ENCODE measurements at regions of chr1 and their contacts with region 1.

Region 1: DNA sequence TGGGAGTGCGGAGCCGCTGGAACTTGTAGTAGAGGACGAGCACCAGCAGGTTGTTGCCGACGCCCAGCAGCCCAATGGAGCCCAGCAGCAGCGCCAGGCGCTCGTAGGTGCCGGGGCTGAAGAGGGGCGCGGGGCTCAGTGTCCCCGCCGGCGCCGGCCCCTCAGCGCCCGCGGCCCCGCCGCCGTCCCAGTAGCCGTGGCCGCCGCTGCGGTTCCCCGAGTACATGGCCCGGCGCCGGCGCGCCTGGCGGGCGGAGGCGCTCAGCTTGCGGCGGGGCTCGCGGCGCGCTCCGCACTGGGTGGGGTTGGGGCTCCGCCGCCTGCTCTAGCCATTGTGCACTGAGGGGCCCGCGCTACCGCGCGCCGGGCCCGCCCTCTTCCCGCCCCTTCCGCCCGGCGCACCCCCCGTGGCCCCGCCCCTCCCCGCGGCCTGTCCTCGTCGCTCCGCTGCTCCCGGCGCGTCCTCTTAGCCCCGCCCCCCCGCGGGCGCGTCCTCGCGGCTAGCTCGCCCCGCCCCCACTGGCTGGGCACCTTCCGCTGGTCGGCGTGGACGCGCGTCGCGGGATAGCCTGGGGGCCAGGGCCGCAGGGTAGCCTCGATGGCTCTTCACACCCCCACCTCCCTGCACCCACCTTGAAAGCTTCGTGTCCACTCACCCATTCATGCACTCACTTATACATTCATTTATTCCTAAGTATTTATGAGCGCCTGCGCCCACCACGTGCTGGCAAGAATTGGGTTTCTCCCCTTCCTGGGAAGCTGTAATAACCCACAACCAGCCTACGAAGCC is at the starts of genes CHML and OPN3:
- DNase-seq: peak; percentile 96
- ATAC-seq: peak; percentile 95
- H3K4me3 Mint-ChIP-seq: peak within 1 kb of the TSS; percentile 93
- H3K27ac Mint-ChIP-seq: peak within 1 kb of the TSS; percentile 91
- H3K4me1 Mint-ChIP-seq: peaks cover 55% of the 10 kb centered on the region
- H3K27me3 Mint-ChIP-seq: no peaks in the 10 kb centered on the region
- CTCF ChIP-seq: no peak
- total RNA-seq, gene CHML: 28.3 and 35.2 TPM in 2 replicates
- total RNA-seq, gene OPN3: 31.5 and 32.1 TPM in 2 replicates

Region 2: DNA sequence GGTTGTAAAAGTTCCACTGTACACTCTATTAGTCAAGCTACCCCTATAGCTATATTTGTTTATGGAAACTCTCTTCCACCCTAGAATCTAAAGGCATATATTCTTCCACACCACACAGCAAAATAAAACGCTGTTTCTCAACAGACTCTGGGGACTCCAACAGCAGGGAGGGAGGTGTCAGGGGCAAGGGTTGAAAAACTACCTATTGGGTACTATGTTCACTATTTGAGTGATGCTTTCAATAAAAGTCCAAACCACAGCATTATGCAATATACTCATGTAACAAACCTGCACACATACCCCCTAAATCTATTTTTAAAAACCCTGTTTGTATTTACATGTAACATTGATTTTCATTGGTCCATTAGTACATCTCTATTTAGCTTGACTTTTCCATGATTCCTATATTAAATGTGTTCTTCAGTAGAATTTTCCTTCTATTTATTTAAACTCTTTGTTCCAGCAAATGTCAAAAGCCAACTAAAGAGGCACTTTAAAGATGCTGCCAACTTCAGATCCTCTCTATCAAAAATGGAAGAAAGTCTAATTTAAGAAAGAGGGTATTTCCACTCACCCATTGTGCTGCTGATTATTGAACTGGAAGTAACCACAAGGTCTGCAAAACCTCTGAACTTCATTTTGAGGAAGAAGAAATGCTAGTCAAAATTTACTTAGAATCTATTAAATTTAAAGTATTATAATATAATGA is 309.5 kb before region 1 on chr1:
- CTCF ChIA-PET with region 1: no interaction called
- POLR2A ChIA-PET with region 1: no interaction called
- intact Hi-C with region 1: loop called (anchors 2 kb)
- DNase-seq: no peak
- ATAC-seq: peak; percentile 83
- H3K4me3 Mint-ChIP-seq: peak overlapping the region; percentile 67
- H3K27ac Mint-ChIP-seq: peak overlapping the region; percentile 84
- H3K4me1 Mint-ChIP-seq: peaks cover 34% of the 10 kb centered on the region
- H3K27me3 Mint-ChIP-seq: no peaks in the 10 kb centered on the region
- CTCF ChIP-seq: no peak

Region 3: DNA sequence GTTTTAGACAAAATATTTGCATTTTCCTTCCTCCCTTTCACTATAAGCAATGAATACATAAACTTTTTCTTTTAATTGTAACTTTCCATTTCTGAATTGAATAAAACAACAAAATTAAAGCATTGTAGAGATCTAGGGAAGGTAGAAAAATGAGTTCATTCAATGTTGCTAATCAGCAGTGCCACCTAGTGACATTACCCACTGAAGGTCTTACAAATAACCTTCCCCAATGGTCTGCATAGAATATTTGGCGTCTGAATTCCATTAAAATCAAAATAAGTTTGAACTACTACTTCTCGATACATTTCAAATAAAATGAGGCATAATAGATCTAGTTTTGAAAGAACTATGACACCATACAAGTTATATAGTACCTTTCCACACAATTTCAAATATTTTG is 140.3 kb before region 1 on chr1:
- CTCF ChIA-PET with region 1: no interaction called
- POLR2A ChIA-PET with region 1: no interaction called
- intact Hi-C with region 1: no loop called
- DNase-seq: no peak
- ATAC-seq: no peak
- H3K4me3 Mint-ChIP-seq: no peak overlapping the region
- H3K27ac Mint-ChIP-seq: no peak overlapping the region
- H3K4me1 Mint-ChIP-seq: no peaks in the 10 kb centered on the region
- H3K27me3 Mint-ChIP-seq: no peaks in the 10 kb centered on the region
- CTCF ChIP-seq: no peak

Region 4: GRCh38 chr1:241551759-241552638 is 88.2 kb before region 1 on chr1:
- CTCF ChIA-PET with region 1: no interaction called
- POLR2A ChIA-PET with region 1: interaction called, 11 read pairs
- intact Hi-C with region 1: loop called (anchors 1 kb)
- DNase-seq: peak; percentile 46
- ATAC-seq: peak; percentile 89
- H3K4me3 Mint-ChIP-seq: peak overlapping the region; percentile 83
- H3K27ac Mint-ChIP-seq: peak overlapping the region; percentile 100
- H3K4me1 Mint-ChIP-seq: peaks cover 62% of the 10 kb centered on the region
- H3K27me3 Mint-ChIP-seq: peaks cover 2% of the 10 kb centered on the region
- CTCF ChIP-seq: no peak

Region 5: DNA sequence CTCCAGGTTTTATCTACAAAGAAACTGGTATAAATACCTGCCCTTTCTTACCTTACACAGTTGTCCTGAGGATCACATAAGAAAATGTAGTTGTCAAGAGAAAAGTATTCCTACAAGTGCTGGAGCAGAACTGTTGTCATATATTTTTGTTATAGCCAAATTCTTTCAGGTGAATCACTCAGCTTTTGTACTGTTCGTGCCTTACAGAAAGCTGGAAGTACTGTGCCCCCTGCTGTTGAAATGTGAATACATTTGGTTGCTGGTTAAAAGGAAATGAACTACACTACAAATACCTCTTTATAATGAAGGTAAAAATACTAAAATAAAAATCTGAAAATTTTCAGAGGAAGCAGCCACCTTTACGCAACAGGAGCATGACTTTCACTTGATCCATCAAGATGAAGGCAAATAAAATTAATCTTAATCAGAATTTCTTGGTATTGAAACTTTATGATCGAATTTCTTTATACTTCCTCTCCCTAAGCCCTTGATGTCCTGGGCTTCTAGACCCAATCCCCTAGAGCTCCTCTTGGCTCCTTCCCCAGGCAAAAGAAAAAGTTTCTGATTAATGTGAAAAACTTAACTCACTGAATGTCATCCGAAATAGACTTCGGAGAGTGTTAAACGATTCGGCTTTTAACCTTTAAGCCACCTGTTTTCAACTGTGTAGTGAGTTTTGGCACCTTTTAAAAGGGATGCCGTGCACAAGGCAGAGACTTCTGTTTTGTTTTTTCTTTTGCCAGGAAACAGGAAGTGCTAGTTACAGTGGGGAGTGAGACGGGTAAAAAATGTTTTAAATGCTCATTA is 12.6 kb before region 1 on chr1:
- CTCF ChIA-PET with region 1: interaction called, 6 read pairs
- POLR2A ChIA-PET with region 1: interaction called, 7 read pairs
- intact Hi-C with region 1: loop called (anchors 1 kb)
- DNase-seq: no peak
- ATAC-seq: peak; percentile 83
- H3K4me3 Mint-ChIP-seq: peak overlapping the region; percentile 66
- H3K27ac Mint-ChIP-seq: peak overlapping the region; percentile 86
- H3K4me1 Mint-ChIP-seq: peaks cover 48% of the 10 kb centered on the region
- H3K27me3 Mint-ChIP-seq: no peaks in the 10 kb centered on the region
- CTCF ChIP-seq: peak; percentile 17

Region 6: DNA sequence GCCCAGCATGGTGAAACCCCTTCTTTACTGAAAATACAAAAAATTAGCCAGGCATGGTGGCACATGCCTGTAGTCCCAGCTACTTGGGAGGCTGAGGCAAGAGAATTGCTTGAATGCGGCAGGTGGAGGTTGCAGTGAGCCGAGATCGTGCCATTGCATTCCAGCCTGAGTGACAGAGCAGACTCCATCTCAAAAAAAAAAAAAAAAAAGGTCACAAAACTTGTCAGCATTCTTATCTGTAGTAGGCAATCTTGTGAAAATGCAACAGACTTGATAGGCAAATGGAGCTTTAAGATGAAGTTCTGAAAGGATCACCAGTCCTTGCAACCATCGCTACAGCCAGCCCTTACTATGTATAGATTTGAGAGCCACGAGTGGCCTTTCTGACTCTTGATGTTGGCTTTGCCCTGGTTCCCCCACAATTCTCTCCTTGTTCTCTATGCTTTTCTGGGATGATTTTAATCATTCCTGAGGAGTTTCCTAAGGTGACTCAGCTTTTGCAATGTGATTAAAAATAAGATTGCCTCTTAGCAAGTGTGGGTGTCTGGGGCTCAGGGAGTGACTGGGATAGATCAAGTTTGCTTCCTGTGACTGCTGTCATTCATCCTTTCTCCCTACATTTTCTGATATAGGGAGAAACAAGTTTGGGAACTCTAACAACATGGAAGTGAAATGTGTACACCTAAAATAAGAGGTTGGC is 365.8 kb after region 1 on chr1:
- CTCF ChIA-PET with region 1: no interaction called
- POLR2A ChIA-PET with region 1: interaction called, 10 read pairs
- intact Hi-C with region 1: no loop called
- DNase-seq: no peak
- ATAC-seq: no peak
- H3K4me3 Mint-ChIP-seq: no peak overlapping the region
- H3K27ac Mint-ChIP-seq: no peak overlapping the region
- H3K4me1 Mint-ChIP-seq: no peaks in the 10 kb centered on the region
- H3K27me3 Mint-ChIP-seq: peaks cover 15% of the 10 kb centered on the region
- CTCF ChIP-seq: no peak

Measured in activated B cell treated with CpG ODN at 0.5 μM for 24 hours (primary cell).